ENCODE measurements at regions of chr12 and their contacts with region 1.

Region 1: DNA sequence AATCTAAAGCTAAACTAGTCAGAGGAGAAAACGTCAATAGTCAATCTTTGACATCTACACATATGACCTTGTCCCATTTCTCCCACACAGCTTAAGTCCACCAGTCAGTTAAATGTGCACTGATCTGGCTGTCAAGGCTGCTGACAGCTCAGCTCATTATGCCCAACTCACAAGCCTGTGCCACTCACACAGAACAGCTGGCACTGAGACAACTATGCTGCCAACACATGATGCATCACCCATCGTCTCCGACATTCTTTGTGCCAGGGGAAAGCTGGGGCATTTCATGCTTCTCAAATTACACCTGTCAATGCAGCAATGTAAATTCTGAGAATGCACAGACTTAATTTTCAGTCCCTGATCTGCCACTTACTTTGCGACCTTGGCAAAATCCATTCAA is 25.3 kb downstream of the GNS start:
- DNase-seq: no peak
- H3K4me3 ChIP-seq: no peak overlapping the region
- H3K4me3 Mint-ChIP-seq: no peak overlapping the region
- H3K27ac ChIP-seq: peak overlapping the region in 1 of 2 donors; percentile 9
- H3K27ac Mint-ChIP-seq: peak overlapping the region in 2 of 7 donors; percentile 12 to 39
- H3K4me1 ChIP-seq: peaks cover 21 to 22% of the 10 kb centered on the region in 2 donors
- H3K4me1 Mint-ChIP-seq: peaks cover 33% of the 10 kb centered on the region
- H3K27me3 ChIP-seq: no peaks in the 10 kb centered on the region
- H3K27me3 Mint-ChIP-seq: peaks cover 0 to 2% (median 0%) of the 10 kb centered on the region in 3 donors
- CTCF ChIP-seq: no peak

Region 2: DNA sequence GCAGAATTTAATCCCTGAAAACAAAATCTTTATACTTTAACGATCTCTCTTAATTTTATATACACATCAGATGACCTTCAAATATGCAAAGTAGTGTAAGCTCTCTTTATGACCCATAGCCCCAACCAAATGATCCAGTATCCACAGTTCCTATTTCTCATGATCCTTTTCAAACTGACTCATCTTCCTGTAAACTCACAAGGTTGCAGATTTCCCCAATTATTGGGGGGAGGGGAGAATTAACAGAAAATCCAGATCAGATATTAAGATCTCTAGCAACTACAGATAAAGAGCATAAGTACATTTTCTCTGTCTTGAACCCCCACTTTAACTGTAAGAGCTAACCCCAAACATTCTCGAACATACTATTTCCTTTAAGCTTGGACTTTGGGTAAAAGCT is 12.8 kb after region 1 on chr12:
- intact Hi-C with region 1: loop called in 1 of 2 experiments (anchors 2 kb)
- DNase-seq: peak; percentile 66 to 87 (median 77)
- H3K4me3 ChIP-seq: peak overlapping the region in 1 of 3 experiments; percentile 52
- H3K4me3 Mint-ChIP-seq: no peak overlapping the region
- H3K27ac ChIP-seq: peak overlapping the region; percentile 56 to 88
- H3K27ac Mint-ChIP-seq: peak overlapping the region; percentile 83 to 92 (median 87)
- H3K4me1 ChIP-seq: peaks cover 84 to 92% of the 10 kb centered on the region in 2 donors
- H3K4me1 Mint-ChIP-seq: peaks cover 77% of the 10 kb centered on the region
- H3K27me3 ChIP-seq: no peaks in the 10 kb centered on the region
- H3K27me3 Mint-ChIP-seq: no peaks in the 10 kb centered on the region
- CTCF ChIP-seq: no peak

Region 3: GRCh38 chr12:64780531-64781279 is 46.8 kb after region 1 on chr12:
- intact Hi-C with region 1: loop called in 1 of 2 experiments (anchors 10 kb)
- DNase-seq: peak in 2 of 3 donors; percentile 23 to 45
- H3K4me3 ChIP-seq: peak overlapping the region; percentile 46 to 77 (median 54)
- H3K4me3 Mint-ChIP-seq: peak overlapping the region; percentile 93 to 95
- H3K27ac ChIP-seq: no peak overlapping the region
- H3K27ac Mint-ChIP-seq: peak overlapping the region in 1 of 7 donors; percentile 80
- H3K4me1 ChIP-seq: peaks cover 24 to 31% of the 10 kb centered on the region in 2 donors
- H3K4me1 Mint-ChIP-seq: peaks cover 25% of the 10 kb centered on the region
- H3K27me3 ChIP-seq: peaks cover 44 to 58% of the 10 kb centered on the region in 2 donors
- H3K27me3 Mint-ChIP-seq: peaks cover 58 to 72% (median 59%) of the 10 kb centered on the region in 3 donors
- CTCF ChIP-seq: no peak